Activated CD4-positive, alpha-beta memory T cell treated with anti-CD3 and anti-CD28 coated beads for 36 hours (primary cell): ENCODE measurements at regions of chr4 and their contacts with region 1.

Region 1: GRCh38 chr4:14783011-14783877 is 219.0 kb upstream of the CPEB2 start:
- DNase-seq: peak; percentile 82
- H3K4me3 Mint-ChIP-seq: no peak overlapping the region
- H3K27ac Mint-ChIP-seq: peak overlapping the region; percentile 77
- H3K4me1 Mint-ChIP-seq: peaks cover 22% of the 10 kb centered on the region
- H3K27me3 Mint-ChIP-seq: peaks cover 7% of the 10 kb centered on the region

Region 2: DNA sequence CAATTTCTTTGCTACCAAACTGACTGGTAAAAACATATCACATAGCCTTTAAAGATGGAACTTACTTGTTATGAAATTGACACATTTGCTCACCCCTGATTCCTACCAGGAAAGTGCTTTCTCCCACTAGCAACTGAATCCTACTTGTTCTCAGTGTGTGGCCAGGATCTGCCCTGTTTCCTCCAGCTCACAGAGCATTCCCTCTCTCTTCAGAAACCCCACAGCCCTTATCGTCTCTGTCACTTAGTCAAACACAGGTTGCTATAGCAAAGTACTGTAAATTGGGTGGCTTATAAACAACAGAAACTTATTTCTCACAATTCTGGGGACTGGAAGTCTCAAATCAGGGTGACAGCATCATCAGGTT is 890.5 kb before region 1 on chr4:
- CTCF ChIA-PET with region 1: no interaction called
- POLR2A ChIA-PET with region 1: no interaction called
- intact Hi-C with region 1: loop called (anchors 5 kb)
- DNase-seq: no peak
- H3K4me3 Mint-ChIP-seq: no peak overlapping the region
- H3K27ac Mint-ChIP-seq: no peak overlapping the region
- H3K4me1 Mint-ChIP-seq: no peaks in the 10 kb centered on the region
- H3K27me3 Mint-ChIP-seq: no peaks in the 10 kb centered on the region

Region 3: GRCh38 chr4:14771504-14772175 is 11.6 kb before region 1 on chr4:
- CTCF ChIA-PET with region 1: no interaction called
- POLR2A ChIA-PET with region 1: no interaction called
- intact Hi-C with region 1: loop called (anchors 1 kb)
- DNase-seq: no peak
- H3K4me3 Mint-ChIP-seq: no peak overlapping the region
- H3K27ac Mint-ChIP-seq: no peak overlapping the region
- H3K4me1 Mint-ChIP-seq: peaks cover 4% of the 10 kb centered on the region
- H3K27me3 Mint-ChIP-seq: peaks cover 22% of the 10 kb centered on the region

Region 4: GRCh38 chr4:14841801-14842768 is 58.8 kb after region 1 on chr4:
- CTCF ChIA-PET with region 1: no interaction called
- POLR2A ChIA-PET with region 1: no interaction called
- intact Hi-C with region 1: loop called (anchors 2 kb)
- DNase-seq: no peak
- H3K4me3 Mint-ChIP-seq: no peak overlapping the region
- H3K27ac Mint-ChIP-seq: no peak overlapping the region
- H3K4me1 Mint-ChIP-seq: peaks cover 15% of the 10 kb centered on the region
- H3K27me3 Mint-ChIP-seq: peaks cover 1% of the 10 kb centered on the region

Region 5: DNA sequence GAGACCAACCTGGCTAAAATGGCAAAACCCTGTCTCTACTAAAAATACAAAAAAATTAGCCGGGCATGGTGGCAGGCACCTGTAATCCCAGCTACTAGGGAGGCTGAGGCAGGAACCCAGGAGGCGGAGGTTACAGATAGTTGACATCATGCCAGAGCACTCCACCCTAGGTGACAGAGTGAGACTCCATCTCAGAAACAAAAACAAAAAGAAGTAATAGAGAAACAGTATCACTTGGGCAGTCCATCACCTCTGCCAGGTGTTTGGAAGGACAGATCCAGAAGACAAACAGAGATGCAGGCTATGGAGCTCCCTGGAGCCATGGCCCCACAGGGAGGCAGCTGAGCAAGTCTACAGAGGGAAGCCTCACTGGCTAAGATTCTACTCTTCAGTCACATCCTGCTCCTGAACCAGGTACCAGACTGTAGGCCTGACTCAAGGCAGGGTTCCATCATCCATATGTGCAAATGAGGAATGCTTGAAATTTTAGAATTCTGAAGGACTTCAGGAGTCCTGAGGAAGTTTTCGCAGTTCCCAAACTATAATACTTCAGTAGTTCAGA is 137.6 kb after region 1 on chr4:
- CTCF ChIA-PET with region 1: interaction called, 3 read pairs
- POLR2A ChIA-PET with region 1: no interaction called
- intact Hi-C with region 1: loop called (anchors 2 kb)
- DNase-seq: peak; percentile 44
- H3K4me3 Mint-ChIP-seq: no peak overlapping the region
- H3K27ac Mint-ChIP-seq: no peak overlapping the region
- H3K4me1 Mint-ChIP-seq: no peaks in the 10 kb centered on the region
- H3K27me3 Mint-ChIP-seq: peaks cover 6% of the 10 kb centered on the region

Region 6: GRCh38 chr4:15034071-15034764 is 251.0 kb after region 1 on chr4:
- CTCF ChIA-PET with region 1: no interaction called
- POLR2A ChIA-PET with region 1: no interaction called
- intact Hi-C with region 1: loop called (anchors 1 kb)
- DNase-seq: no peak
- H3K4me3 Mint-ChIP-seq: no peak overlapping the region
- H3K27ac Mint-ChIP-seq: no peak overlapping the region
- H3K4me1 Mint-ChIP-seq: peaks cover 28% of the 10 kb centered on the region
- H3K27me3 Mint-ChIP-seq: no peaks in the 10 kb centered on the region